HCT116 (cell line): ENCODE measurements at regions of chr1 and their contacts with region 1.

Region 1: DNA sequence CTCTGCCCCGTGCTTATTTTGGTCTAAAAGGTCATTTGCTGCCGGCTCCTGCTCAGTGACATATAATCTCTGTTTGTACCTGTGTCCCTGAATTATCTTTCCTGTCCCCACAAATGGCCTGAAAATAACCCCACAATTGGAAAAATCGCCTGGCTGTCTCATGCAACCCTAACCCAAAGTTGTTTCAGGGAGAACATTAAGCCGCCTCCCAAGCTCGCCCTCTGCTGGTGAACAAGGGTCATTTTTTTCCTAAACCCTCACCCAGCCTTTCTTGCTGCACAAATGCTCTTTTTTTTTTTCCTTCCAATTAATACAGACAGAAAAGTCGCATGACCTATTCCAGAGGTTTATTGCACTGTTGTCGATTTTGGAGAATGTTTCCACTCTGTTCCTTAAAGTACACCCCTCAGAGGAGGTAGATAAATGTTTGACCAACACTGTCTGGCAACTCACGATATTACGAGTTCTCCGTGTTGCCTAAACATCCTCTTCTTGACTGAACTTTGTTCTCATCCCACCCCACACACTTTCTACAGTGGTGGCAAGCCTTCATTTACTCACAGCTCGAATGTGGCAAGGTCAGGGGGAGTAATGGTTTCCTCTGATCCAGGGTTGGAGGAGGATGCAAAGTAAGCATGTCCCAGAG is 148.7 kb downstream of the ZZZ3 start:
- DNase-seq: peak; percentile 43
- ATAC-seq: peak; percentile 33; the same call in 1 of the 2 replicates
- H3K4me3 ChIP-seq: no peak overlapping the region
- H3K27ac ChIP-seq: no peak overlapping the region
- H3K4me1 ChIP-seq: peaks cover 17 to 50% of the 10 kb centered on the region in 2 experiments
- H3K27me3 ChIP-seq: no peaks in the 10 kb centered on the region
- CTCF ChIP-seq: peak; percentile 62 to 83 (median 70); a peak in 5 of 6 replicates
- POLR2A ChIP-seq: no peak
- RAD21 ChIP-seq: peak; percentile 73

Region 2: GRCh38 chr1:77557053-77557452 is 23.3 kb after region 1 on chr1:
- CTCF ChIA-PET with region 1: no interaction called
- POLR2A ChIA-PET with region 1: no interaction called
- RAD21 ChIA-PET with region 1: no interaction called
- intact Hi-C with region 1: no loop called
- DNase-seq: no peak
- ATAC-seq: no peak
- H3K4me3 ChIP-seq: no peak overlapping the region
- H3K27ac ChIP-seq: no peak overlapping the region
- H3K4me1 ChIP-seq: no peaks in the 10 kb centered on the region
- H3K27me3 ChIP-seq: no peaks in the 10 kb centered on the region
- CTCF ChIP-seq: no peak
- POLR2A ChIP-seq: no peak
- RAD21 ChIP-seq: no peak

Region 3: DNA sequence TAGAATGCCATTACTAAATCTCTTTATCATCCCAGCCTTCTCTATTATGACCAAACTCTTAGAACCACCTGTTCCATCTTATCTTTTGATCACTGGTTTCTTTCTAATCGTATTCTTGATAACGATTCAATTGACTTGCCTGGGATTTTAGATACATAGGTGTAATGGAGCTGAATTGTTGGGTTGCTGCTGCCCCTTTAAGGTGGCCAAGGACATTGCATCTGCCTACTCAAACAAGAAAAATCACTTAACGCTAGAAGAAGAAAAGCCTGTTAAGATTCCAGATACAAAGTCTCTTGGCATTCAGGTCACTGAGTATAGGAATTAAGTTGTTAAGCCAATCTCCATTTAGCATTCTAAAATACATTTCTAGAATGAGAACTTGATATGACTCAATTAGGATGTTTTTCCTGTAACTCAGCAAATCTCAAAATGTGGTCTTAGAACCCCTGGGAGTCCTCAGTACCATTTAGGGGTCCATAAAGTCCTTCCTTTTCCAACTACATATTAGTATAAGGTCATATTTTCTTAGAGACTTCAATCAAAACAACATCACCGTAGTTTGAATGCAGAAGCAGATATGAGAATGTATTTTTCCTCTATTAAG is 367.0 kb after region 1 on chr1:
- CTCF ChIA-PET with region 1: interaction called, 4 read pairs
- POLR2A ChIA-PET with region 1: no interaction called
- RAD21 ChIA-PET with region 1: no interaction called
- intact Hi-C with region 1: loop called (anchors 10 kb)
- DNase-seq: peak; percentile 53
- ATAC-seq: peak; percentile 90
- H3K4me3 ChIP-seq: no peak overlapping the region
- H3K27ac ChIP-seq: no peak overlapping the region
- H3K4me1 ChIP-seq: no peaks in the 10 kb centered on the region
- H3K27me3 ChIP-seq: no peaks in the 10 kb centered on the region
- CTCF ChIP-seq: peak; percentile 56 to 84 (median 73); a peak in 5 of 6 replicates
- POLR2A ChIP-seq: no peak
- RAD21 ChIP-seq: peak; percentile 82

Region 4: DNA sequence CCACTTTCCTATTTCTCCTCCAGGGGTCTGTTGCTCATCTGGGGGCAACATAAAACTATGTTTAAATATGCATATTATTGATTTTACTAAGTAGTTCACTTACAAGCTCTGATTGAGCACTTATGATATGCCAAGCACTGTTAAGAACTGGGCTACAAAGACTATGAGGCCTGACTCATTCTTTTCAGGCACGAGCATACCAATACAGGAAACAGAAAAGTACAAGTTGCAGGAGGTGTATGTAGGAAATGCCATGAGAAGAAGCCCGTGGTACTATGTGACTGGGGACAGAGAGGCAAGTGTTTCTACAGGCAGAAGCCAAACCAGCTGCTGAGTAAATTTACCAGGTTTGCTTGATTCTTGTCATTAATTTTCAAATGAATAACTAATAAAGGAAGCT is 836.6 kb after region 1 on chr1:
- CTCF ChIA-PET with region 1: no interaction called
- POLR2A ChIA-PET with region 1: no interaction called
- RAD21 ChIA-PET with region 1: no interaction called
- intact Hi-C with region 1: no loop called
- DNase-seq: no peak
- ATAC-seq: no peak
- H3K4me3 ChIP-seq: no peak overlapping the region
- H3K27ac ChIP-seq: no peak overlapping the region
- H3K4me1 ChIP-seq: no peaks in the 10 kb centered on the region
- H3K27me3 ChIP-seq: no peaks in the 10 kb centered on the region
- CTCF ChIP-seq: no peak
- POLR2A ChIP-seq: no peak
- RAD21 ChIP-seq: no peak